Sigmoid colon (tissue), 7 donors: ENCODE measurements at regions of chr10 and their contacts with region 1.

Region 1: GRCh38 chr10:122703439-122704118 is 3.9 kb upstream of the C10orf120 start:
- DNase-seq: peak; percentile 72
- H3K4me3 ChIP-seq: no peak overlapping the region
- H3K27ac ChIP-seq: no peak overlapping the region
- H3K4me1 ChIP-seq: no peaks in the 10 kb centered on the region
- H3K27me3 ChIP-seq: no peaks in the 10 kb centered on the region
- CTCF ChIP-seq: peak; percentile 22 to 80 (median 75)
- EP300 ChIP-seq: no peak
- POLR2A ChIP-seq: no peak

Region 2: GRCh38 chr10:122648599-122649428 is 54.8 kb before region 1 on chr10:
- intact Hi-C with region 1: loop called (anchors 1 kb)
- DNase-seq: peak; percentile 56
- H3K4me3 ChIP-seq: no peak overlapping the region
- H3K27ac ChIP-seq: no peak overlapping the region
- H3K4me1 ChIP-seq: no peaks in the 10 kb centered on the region
- H3K27me3 ChIP-seq: no peaks in the 10 kb centered on the region
- CTCF ChIP-seq: peak; percentile 32 to 70 (median 59)
- EP300 ChIP-seq: no peak
- POLR2A ChIP-seq: no peak